Activated B cell treated with CpG ODN at 0.5 μM for 24 hours (primary cell): ENCODE measurements at regions of chr14 and their contacts with region 1.

Region 1: DNA sequence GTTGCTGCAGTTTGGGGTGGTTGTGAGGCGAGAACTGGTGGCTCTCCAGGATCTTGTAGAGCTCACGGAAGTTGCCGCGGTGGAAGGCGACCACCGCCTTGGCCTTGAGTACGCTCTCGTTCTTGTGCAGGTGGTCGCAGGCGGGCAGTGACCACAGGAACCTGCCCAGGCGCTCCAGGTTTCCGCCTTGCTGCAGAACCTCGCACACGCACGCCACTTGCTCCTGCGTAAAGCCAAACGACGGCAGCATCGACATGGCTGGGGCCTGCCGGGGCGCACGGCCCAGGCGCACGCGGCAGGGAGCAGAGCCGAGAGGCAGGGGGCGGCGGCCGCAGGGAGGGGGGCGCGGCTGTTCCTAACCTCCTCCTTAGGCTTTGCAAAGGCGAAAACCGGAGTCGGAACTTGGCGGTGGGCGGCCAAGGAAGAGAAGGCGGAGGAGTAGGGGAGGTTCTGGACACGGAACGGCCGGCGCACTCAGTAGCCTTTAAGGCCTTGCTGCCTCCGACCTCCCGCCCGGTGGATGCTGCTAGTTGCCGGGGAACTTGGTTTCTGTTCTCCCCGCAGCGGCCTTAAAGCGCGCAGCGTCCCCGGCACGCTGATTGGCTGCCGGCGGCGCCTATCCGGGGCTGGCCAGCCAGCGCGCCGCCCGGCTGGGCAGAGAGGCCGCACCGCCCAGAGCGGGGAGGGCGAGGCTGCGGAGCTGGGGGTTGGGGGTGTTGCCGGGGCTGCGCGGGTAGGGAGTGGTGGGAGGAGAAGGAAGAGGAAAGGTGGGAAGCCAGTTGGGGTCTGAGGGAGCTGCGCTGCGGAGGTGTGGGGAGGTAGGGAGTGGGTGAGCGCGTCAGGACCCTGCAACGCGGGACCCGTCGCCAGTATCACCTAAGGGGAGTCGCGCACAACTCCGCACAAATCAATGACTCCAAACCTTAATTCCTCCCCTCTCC is at the start of gene SIX1:
- DNase-seq: peak; percentile 27
- ATAC-seq: peak; percentile 64
- H3K4me3 Mint-ChIP-seq: peak within 1 kb of the TSS; percentile 60
- H3K27ac Mint-ChIP-seq: no peak within 1 kb of the TSS
- H3K4me1 Mint-ChIP-seq: peaks cover 31% of the 10 kb centered on the region
- H3K27me3 Mint-ChIP-seq: peaks cover 79% of the 10 kb centered on the region
- CTCF ChIP-seq: no peak
- total RNA-seq, gene SIX1: not detected in 2 replicates

Region 2: GRCh38 chr14:60514741-60515491 is 134.3 kb before region 1 on chr14:
- CTCF ChIA-PET with region 1: no interaction called
- POLR2A ChIA-PET with region 1: no interaction called
- intact Hi-C with region 1: loop called (anchors 2 kb)
- DNase-seq: no peak
- ATAC-seq: peak; percentile 10
- H3K4me3 Mint-ChIP-seq: no peak overlapping the region
- H3K27ac Mint-ChIP-seq: no peak overlapping the region
- H3K4me1 Mint-ChIP-seq: peaks cover 19% of the 10 kb centered on the region
- H3K27me3 Mint-ChIP-seq: peaks cover 62% of the 10 kb centered on the region
- CTCF ChIP-seq: no peak